Calu3 (cell line): ENCODE measurements at regions of chrX and their contacts with region 1.

Region 1: GRCh38 chrX:123698979-123699520 is 33.8 kb downstream of the THOC2 start:
- DNase-seq: no peak
- H3K4me3 Mint-ChIP-seq: no peak overlapping the region
- H3K27ac Mint-ChIP-seq: no peak overlapping the region
- H3K4me1 Mint-ChIP-seq: no peaks in the 10 kb centered on the region
- H3K27me3 Mint-ChIP-seq: no peaks in the 10 kb centered on the region
- CTCF ChIP-seq: no peak

Region 2: GRCh38 chrX:123617007-123617406 is 82.0 kb before region 1 on chrX:
- CTCF ChIA-PET with region 1: no interaction called
- intact Hi-C with region 1: no loop called
- DNase-seq: no peak
- H3K4me3 Mint-ChIP-seq: no peak overlapping the region
- H3K27ac Mint-ChIP-seq: no peak overlapping the region
- H3K4me1 Mint-ChIP-seq: no peaks in the 10 kb centered on the region
- H3K27me3 Mint-ChIP-seq: no peaks in the 10 kb centered on the region
- CTCF ChIP-seq: no peak

Region 3: GRCh38 chrX:123818243-123818642 is 119.2 kb after region 1 on chrX:
- CTCF ChIA-PET with region 1: interaction called, 12 read pairs
- intact Hi-C with region 1: no loop called
- DNase-seq: peak; percentile 37
- H3K4me3 Mint-ChIP-seq: no peak overlapping the region
- H3K27ac Mint-ChIP-seq: peak overlapping the region; percentile 20
- H3K4me1 Mint-ChIP-seq: peaks cover 24% of the 10 kb centered on the region
- H3K27me3 Mint-ChIP-seq: no peaks in the 10 kb centered on the region
- CTCF ChIP-seq: no peak